ENCODE measurements at regions of chr5 and their contacts with region 1.

Region 1: GRCh38 chr5:41869739-41870626 is at the start of gene OXCT1:
- DNase-seq: peak; percentile 95
- H3K4me3 ChIP-seq: peak within 1 kb of the TSS; percentile 95
- H3K27ac ChIP-seq: peak within 1 kb of the TSS; percentile 78
- H3K4me1 ChIP-seq: no peaks in the 10 kb centered on the region
- H3K27me3 ChIP-seq: no peaks in the 10 kb centered on the region
- total RNA-seq, gene OXCT1: 16.1 and 18.8 TPM in 2 replicates

Region 2: DNA sequence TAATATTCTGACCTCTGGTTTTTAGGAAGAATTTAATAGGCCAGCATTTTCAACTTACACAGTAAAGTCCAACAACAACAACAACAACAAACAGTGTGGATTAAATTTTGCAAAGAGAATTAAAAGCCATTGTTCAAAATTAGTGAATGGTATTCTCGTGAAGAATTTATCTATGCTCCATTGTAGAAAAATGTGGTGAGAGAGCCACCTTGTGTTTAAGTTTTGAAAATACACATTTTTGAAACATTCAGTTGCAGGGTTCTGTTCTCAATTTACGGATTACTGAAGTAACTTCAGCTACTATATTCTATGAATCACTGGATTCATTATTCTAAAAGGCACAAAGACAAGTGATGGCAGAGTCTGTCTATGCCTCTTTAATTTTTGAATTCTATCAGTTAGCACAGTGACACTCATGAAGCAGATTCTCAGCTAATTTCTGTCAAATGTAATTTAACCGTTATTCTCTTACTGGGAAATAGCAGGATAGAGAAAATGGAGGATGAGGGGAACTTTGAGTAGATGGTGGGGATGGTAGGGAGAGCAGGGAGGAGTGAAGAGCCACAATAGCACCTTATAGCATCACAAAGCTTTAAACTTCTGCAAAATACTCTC is 897.6 kb after region 1 on chr5:
- in situ Hi-C with region 1: loop called (anchors 25 kb)
- DNase-seq: peak; percentile 58
- H3K4me3 ChIP-seq: no peak overlapping the region
- H3K27ac ChIP-seq: no peak overlapping the region
- H3K4me1 ChIP-seq: no peaks in the 10 kb centered on the region
- H3K27me3 ChIP-seq: no peaks in the 10 kb centered on the region

Measured in GM23248 (cell line).